ENCODE measurements at regions of chr22 and their contacts with region 1.

Region 1: GRCh38 chr22:40679964-40680818 is 907 bp downstream of the MCHR1 start:
- DNase-seq: peak in 1 of 5 donors; percentile 61
- H3K4me3 ChIP-seq: peak overlapping the region; percentile 35
- H3K27ac ChIP-seq: peak overlapping the region in 1 of 2 donors; percentile 30
- H3K4me1 ChIP-seq: peaks cover 14% of the 10 kb centered on the region
- H3K27me3 ChIP-seq: no peaks in the 10 kb centered on the region
- CTCF ChIP-seq: peak in 1 of 3 donors; percentile 17
- EP300 ChIP-seq: no peak
- POLR2A ChIP-seq: no peak

Region 2: GRCh38 chr22:40597526-40598430 is 82.4 kb before region 1 on chr22:
- intact Hi-C with region 1: no loop called
- DNase-seq: no peak
- H3K4me3 ChIP-seq: no peak overlapping the region
- H3K27ac ChIP-seq: no peak overlapping the region
- H3K4me1 ChIP-seq: peaks cover 14% of the 10 kb centered on the region
- H3K27me3 ChIP-seq: no peaks in the 10 kb centered on the region
- CTCF ChIP-seq: no peak
- EP300 ChIP-seq: no peak
- POLR2A ChIP-seq: no peak

Region 3: GRCh38 chr22:40757071-40757470 is 76.9 kb after region 1 on chr22:
- intact Hi-C with region 1: loop called in 1 of 4 experiments (anchors 5 kb)
- DNase-seq: no peak
- H3K4me3 ChIP-seq: no peak overlapping the region
- H3K27ac ChIP-seq: no peak overlapping the region
- H3K4me1 ChIP-seq: peaks cover 2% of the 10 kb centered on the region
- H3K27me3 ChIP-seq: no peaks in the 10 kb centered on the region
- CTCF ChIP-seq: no peak
- EP300 ChIP-seq: no peak
- POLR2A ChIP-seq: no peak

Region 4: DNA sequence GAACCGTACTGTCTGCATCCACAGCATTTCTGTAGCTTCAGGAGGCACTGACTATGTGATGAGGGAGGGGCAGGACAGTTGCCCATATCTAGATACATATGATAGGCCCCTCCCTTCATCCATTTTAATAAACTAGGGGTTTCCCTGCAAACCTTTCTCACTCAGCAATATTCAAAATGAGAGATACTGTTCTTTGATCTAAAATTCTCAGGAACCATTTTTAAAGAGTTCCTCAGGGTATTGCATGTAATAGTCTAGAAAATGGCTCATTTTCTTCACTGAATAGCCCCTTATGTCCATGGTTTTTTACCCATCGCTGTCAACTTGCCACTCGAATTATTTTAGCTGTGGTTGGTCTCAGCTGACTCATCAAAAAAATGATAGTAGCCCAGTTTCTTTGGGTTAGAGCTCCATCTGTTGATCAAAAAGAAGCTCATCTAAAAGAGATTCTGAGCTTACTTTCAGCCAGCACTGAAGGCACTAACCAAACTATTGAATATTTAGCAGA is 218.7 kb after region 1 on chr22:
- intact Hi-C with region 1: loop called in 1 of 4 experiments (anchors 5 kb)
- DNase-seq: no peak
- H3K4me3 ChIP-seq: no peak overlapping the region
- H3K27ac ChIP-seq: no peak overlapping the region
- H3K4me1 ChIP-seq: no peaks in the 10 kb centered on the region
- H3K27me3 ChIP-seq: no peaks in the 10 kb centered on the region
- CTCF ChIP-seq: peak; percentile 16 to 55 (median 54)
- EP300 ChIP-seq: no peak
- POLR2A ChIP-seq: no peak

Measured in ovary (tissue), 10 donors.